Dendritic cell treated with granulocyte-macrophage colony-stimulating factor and Interleukin-4, amounts not matched to agents 40 ng/mL and 50 ng/mL, for 4 days (primary cell): ENCODE measurements at regions of chr16 and their contacts with region 1.

Region 1: GRCh38 chr16:82031116-82032084 is 3.7 kb upstream of the HSD17B2 start:
- H3K4me3 Mint-ChIP-seq: no peak overlapping the region
- H3K27ac Mint-ChIP-seq: no peak overlapping the region
- H3K4me1 Mint-ChIP-seq: no peaks in the 10 kb centered on the region
- H3K27me3 Mint-ChIP-seq: peaks cover 14% of the 10 kb centered on the region

Region 2: GRCh38 chr16:82456683-82457082 is 425.3 kb after region 1 on chr16:
- intact Hi-C with region 1: loop called (anchors 5 kb)
- H3K4me3 Mint-ChIP-seq: no peak overlapping the region
- H3K27ac Mint-ChIP-seq: no peak overlapping the region
- H3K4me1 Mint-ChIP-seq: no peaks in the 10 kb centered on the region
- H3K27me3 Mint-ChIP-seq: no peaks in the 10 kb centered on the region